ENCODE measurements at regions of chr2 and their contacts with region 1.

Region 1: DNA sequence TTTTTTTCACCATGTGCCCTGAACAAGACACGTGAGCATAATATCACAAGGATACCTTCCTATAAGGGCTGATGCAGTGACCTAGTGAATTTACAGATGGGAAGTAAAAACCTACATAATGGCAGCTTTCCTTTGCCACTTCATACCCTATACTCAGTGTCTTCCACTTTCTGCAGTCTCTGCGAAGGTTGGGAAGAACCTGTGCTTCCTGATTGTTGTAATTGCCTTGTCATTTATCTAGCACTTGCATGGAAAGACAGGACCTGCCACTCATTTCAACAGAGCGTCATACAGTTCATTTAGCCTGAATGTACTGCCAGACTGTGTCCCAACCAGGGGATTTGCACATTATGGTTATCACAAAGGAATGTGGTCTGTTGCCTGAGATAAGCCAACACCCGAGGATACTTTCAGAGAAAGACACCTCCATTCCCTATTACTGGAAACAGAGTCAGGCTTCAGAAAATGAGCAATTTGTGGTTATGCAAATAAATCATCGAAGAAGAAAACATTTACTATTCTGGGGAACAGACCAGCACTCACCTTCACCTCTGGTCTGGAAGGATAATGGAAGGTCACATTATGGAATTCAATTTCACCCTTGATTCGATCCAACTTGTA is 55.0 kb downstream of the ABCB11 start:
- DNase-seq: peak; percentile 65 to 98 (median 81)
- ATAC-seq: peak; percentile 98
- H3K4me3 ChIP-seq: no peak overlapping the region
- H3K27ac ChIP-seq: peak overlapping the region; percentile 70
- H3K4me1 ChIP-seq: peaks cover 4 to 10% of the 10 kb centered on the region in 2 experiments; a peak in 3 of 5 replicates
- H3K27me3 ChIP-seq: no peaks in the 10 kb centered on the region
- CTCF ChIP-seq: no peak
- EP300 ChIP-seq: peak; percentile 99
- POLR2A ChIP-seq: no peak
- RAD21 ChIP-seq: peak in 1 of 2 experiments; percentile 55; a peak in 2 of 4 replicates

Region 2: GRCh38 chr2:169005080-169005598 is 29.0 kb after region 1 on chr2:
- CTCF ChIA-PET with region 1: no interaction called
- POLR2A ChIA-PET with region 1: no interaction called
- in situ Hi-C with region 1: no loop called
- intact Hi-C with region 1: loop called (anchors 2 kb)
- DNase-seq: peak in 1 of 4 experiments; percentile 51
- ATAC-seq: peak; percentile 53
- H3K4me3 ChIP-seq: no peak overlapping the region
- H3K27ac ChIP-seq: no peak overlapping the region
- H3K4me1 ChIP-seq: peaks cover 0 to 13% of the 10 kb centered on the region in 2 experiments; a peak in 4 of 5 replicates
- H3K27me3 ChIP-seq: no peaks in the 10 kb centered on the region
- CTCF ChIP-seq: no peak
- EP300 ChIP-seq: no peak
- POLR2A ChIP-seq: no peak
- RAD21 ChIP-seq: no peak

Region 3: DNA sequence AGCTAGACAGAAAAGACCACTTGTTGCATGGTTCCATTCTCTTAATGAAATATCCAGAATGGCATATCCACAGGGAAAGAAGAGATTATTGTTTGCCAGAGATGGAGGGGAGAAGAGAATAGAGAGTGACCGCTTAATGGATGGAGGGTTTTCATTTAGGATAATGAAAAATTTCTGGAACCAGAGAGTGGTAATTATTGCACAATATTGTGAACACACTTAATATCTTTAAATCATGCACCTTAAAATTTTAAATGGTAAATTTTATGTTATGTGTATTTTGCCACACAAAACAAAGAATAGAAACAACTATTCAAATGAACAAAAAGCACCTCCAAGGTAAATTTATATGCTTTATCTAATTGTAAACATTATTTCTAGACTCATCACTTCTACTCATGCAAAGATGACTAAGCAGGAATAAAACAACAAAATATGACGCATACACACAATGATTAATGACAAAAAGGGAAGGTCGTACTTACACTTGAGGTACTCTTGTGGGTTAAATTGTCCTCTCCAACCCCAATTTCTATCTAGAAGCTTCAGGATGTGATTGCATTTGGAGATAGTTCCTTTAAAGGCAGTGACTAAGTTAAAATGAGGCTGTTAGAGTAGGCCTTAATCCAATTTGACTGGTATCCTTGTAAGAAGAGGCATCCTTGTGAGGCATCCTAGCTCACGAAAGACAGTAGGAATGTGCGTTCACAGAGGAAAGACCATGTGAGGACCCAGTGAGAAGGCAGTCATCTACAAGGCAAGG is 74.5 kb after region 1 on chr2:
- CTCF ChIA-PET with region 1: no interaction called
- POLR2A ChIA-PET with region 1: no interaction called
- in situ Hi-C with region 1: no loop called
- intact Hi-C with region 1: loop called (anchors 5 kb)
- DNase-seq: peak; percentile 54 to 81 (median 63)
- ATAC-seq: peak; percentile 93
- H3K4me3 ChIP-seq: no peak overlapping the region
- H3K27ac ChIP-seq: peak overlapping the region; percentile 87
- H3K4me1 ChIP-seq: peaks cover 0 to 18% of the 10 kb centered on the region in 2 experiments; a peak in 3 of 5 replicates
- H3K27me3 ChIP-seq: no peaks in the 10 kb centered on the region
- CTCF ChIP-seq: no peak
- EP300 ChIP-seq: peak; percentile 87
- POLR2A ChIP-seq: no peak
- RAD21 ChIP-seq: 0 out of 4 replicates have a peak, but pooled peaks of 1 of the 2 experiments have one; percentile 22

Region 4: DNA sequence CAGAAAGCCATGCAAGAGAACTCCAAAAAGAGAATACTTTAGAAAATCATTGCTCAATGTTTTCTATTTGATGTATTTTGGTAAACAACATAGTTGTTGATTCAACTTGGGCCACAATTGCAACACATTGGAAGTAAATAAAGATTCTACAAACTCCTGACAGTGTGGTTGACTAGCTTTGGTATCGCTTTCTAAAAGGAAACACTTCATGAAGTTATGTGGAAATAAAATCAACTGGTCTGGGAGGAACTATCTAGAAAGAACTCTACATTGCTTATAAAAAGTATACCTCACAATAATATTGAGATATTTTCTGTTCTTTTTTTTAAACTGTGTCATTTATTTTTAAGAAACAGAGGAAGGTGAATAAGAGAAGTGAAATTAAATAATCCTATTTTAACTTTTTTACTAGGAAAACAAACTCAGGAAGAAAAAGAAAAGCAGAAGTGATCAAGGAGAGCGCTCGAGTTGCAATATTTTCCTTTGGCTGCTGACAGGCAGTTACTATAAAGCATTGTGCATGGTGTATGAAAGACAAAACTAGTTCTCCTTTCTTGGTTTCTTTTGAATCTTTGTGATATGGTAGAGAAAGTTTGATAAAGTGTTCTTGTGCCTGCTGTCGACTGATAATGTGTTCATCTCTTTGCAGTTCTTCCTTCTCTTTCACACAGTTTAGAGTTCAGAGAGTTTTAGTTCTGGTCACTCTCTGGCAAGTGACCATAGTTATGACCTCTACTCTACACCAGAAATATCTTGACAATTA is 96.2 kb after region 1 on chr2:
- CTCF ChIA-PET with region 1: no interaction called
- POLR2A ChIA-PET with region 1: no interaction called
- in situ Hi-C with region 1: no loop called
- intact Hi-C with region 1: loop called (anchors 2 kb)
- DNase-seq: peak in 2 of 4 experiments; percentile 52 to 79
- ATAC-seq: peak; percentile 84
- H3K4me3 ChIP-seq: no peak overlapping the region
- H3K27ac ChIP-seq: peak overlapping the region; percentile 62
- H3K4me1 ChIP-seq: peaks cover 7 to 46% of the 10 kb centered on the region in 2 experiments; a peak in 4 of 5 replicates
- H3K27me3 ChIP-seq: no peaks in the 10 kb centered on the region
- CTCF ChIP-seq: no peak
- EP300 ChIP-seq: peak; percentile 83
- POLR2A ChIP-seq: no peak
- RAD21 ChIP-seq: peak in 1 of 2 experiments; percentile 38; a peak in 2 of 4 replicates

Measured in K562 (cell line).